ENCODE measurements at regions of chr5 and their contacts with region 1.

Region 1: GRCh38 chr5:160342403-160342941 is 28.0 kb downstream of the C1QTNF2 start:
- DNase-seq: no peak
- H3K4me3 ChIP-seq: no peak overlapping the region
- H3K27ac ChIP-seq: no peak overlapping the region
- H3K4me1 ChIP-seq: peaks cover 0 to 5% (median 4%) of the 10 kb centered on the region in 4 experiments; a peak in 5 of 7 replicates
- H3K27me3 ChIP-seq: no peaks in the 10 kb centered on the region; a peak in 1 of 7 replicates
- CTCF ChIP-seq: no peak
- EP300 ChIP-seq: no peak
- POLR2A ChIP-seq: no peak
- RAD21 ChIP-seq: no peak

Region 2: GRCh38 chr5:160021831-160022446 is 320.5 kb before region 1 on chr5:
- CTCF ChIA-PET with region 1: interaction called, 47 read pairs
- POLR2A ChIA-PET with region 1: no interaction called
- DNase-seq: peak in 1 of 2 experiments; percentile 57
- H3K4me3 ChIP-seq: no peak overlapping the region
- H3K27ac ChIP-seq: no peak overlapping the region
- H3K4me1 ChIP-seq: no peaks in the 10 kb centered on the region
- H3K27me3 ChIP-seq: no peaks in the 10 kb centered on the region
- CTCF ChIP-seq: peak in 2 of 3 experiments; percentile 72 to 75; a peak in 3 of 4 replicates
- EP300 ChIP-seq: no peak
- POLR2A ChIP-seq: no peak
- RAD21 ChIP-seq: peak; percentile 83 to 90

Region 3: DNA sequence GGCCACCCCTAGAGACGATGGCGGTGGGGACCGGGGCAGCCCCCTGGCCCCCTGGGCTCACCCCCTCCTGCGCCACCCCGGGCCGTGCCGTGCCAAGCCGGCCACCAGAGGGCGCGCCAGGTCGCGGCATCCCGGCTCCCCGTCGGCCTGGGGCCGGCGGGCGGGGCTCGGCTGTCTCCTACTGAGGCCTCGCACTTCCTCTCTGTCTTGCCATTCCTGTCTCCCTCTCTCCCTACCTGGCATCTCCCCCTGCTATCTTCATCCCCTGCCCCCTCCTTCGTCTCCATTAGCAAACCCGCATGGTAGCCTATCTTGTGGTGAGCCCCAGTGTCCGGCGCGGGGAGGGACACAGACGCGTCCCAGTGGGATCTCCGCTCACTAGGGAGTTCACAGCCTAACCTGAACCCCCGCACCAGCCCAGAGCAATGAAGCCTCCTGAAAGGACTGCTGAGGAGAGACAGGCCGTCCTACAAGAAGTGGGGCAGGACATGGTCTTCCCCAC is 143.0 kb before region 1 on chr5:
- CTCF ChIA-PET with region 1: interaction called, 62 read pairs
- POLR2A ChIA-PET with region 1: interaction called, 3 read pairs
- DNase-seq: peak in 1 of 2 experiments; percentile 93
- H3K4me3 ChIP-seq: peak overlapping the region in 3 of 4 experiments; percentile 5 to 51 (median 22); a peak in 5 of 8 replicates
- H3K27ac ChIP-seq: no peak overlapping the region
- H3K4me1 ChIP-seq: peaks cover 7 to 29% (median 17%) of the 10 kb centered on the region in 4 experiments
- H3K27me3 ChIP-seq: no peaks in the 10 kb centered on the region
- CTCF ChIP-seq: peak; percentile 77 to 90 (median 87)
- EP300 ChIP-seq: peak in 1 of 2 experiments; percentile 81; a peak in 1 of 3 replicates
- POLR2A ChIP-seq: no peak
- RAD21 ChIP-seq: peak; percentile 82 to 90

Region 4: DNA sequence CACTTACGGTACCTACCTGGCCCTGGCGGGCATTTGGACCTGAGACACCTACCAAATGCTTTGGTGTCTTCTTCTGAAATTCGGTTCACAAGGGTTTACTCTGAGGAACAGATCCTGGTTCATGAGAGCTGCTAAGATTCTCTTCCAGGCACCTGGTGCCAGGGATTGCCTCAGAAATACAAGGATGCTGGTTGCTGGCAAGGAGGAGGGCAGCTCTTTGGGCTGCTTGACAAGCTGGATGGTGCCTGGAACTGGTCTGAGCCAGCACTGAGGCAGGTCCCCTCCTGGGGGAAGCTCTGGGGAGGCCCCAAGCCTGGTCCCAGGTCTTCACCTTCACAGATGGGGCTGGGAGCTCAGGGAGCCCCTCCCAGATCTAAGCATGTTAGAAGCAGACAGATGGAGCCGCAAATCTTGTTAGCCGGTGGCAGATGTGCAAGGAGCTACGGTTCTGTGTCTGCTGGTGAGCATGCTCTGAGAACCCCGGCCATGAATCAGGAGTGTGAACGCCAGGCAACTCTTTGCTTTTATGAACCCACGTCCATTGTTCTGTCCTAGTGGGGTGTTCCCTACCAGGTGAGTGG is 96.9 kb before region 1 on chr5:
- CTCF ChIA-PET with region 1: interaction called, 231 read pairs
- POLR2A ChIA-PET with region 1: interaction called, 9 read pairs
- DNase-seq: no peak
- H3K4me3 ChIP-seq: no peak overlapping the region
- H3K27ac ChIP-seq: no peak overlapping the region
- H3K4me1 ChIP-seq: peaks cover 0 to 3% (median 0%) of the 10 kb centered on the region in 4 experiments; a peak in 4 of 7 replicates
- H3K27me3 ChIP-seq: no peaks in the 10 kb centered on the region
- CTCF ChIP-seq: no peak
- EP300 ChIP-seq: no peak
- POLR2A ChIP-seq: 0 out of 3 replicates have a peak, but pooled peaks of 1 of the 2 experiments have one; percentile 20
- RAD21 ChIP-seq: no peak

Region 5: GRCh38 chr5:160287378-160288051 is 55.0 kb before region 1 on chr5:
- CTCF ChIA-PET with region 1: interaction called, 15 read pairs
- POLR2A ChIA-PET with region 1: interaction called, 6 read pairs
- DNase-seq: peak; percentile 81 to 91
- H3K4me3 ChIP-seq: peak overlapping the region in 1 of 4 experiments; percentile 36; a peak in 2 of 8 replicates
- H3K27ac ChIP-seq: peak overlapping the region; percentile 86
- H3K4me1 ChIP-seq: peaks cover 11 to 37% (median 22%) of the 10 kb centered on the region in 4 experiments
- H3K27me3 ChIP-seq: no peaks in the 10 kb centered on the region
- CTCF ChIP-seq: no peak
- EP300 ChIP-seq: peak in 1 of 2 experiments; percentile 85; a peak in 1 of 3 replicates
- POLR2A ChIP-seq: peak; percentile 54 to 64; a peak in 1 of 3 replicates
- RAD21 ChIP-seq: peak in 1 of 2 experiments; percentile 22; a peak in 1 of 4 replicates

Region 6: DNA sequence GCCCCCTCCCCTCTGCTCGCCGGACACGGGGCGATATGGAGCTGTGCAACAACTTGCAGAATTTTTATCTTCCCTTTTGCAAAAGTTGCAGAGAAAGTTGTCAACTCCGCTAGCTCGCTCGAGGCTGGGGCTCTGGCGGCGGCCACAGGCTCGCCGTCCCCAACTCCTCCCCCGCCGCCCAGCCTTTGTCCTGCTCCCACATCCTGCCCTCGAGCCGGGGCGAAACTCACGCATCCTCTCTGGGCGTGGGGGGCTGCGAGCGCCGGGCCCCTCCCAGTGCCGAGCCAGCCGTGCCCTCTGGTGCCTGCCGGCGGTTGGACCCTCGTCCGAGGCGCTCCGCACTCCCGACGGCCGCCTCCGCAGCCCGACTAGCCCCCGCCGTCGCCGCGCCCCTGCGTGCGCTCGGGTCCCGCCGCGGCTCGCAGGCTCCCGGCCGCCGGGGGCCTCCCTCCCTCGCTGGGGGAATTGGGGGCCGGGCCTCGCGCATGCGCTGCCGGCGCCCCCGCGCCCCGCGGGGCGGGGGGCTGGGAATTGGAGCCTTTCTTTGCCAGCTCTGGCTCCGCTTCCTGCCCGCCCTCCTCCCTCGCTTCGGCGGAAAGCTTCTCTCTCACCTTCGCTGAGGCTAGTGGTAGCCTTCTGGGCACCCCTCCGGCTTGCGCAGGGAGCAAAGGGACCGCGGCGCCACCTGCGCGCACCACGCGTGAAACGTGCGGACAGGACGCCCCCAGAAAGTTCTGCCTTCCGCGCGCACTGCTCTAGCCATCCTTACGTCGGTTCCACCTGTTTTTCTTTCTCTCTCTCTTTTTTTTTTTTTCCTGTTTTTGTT is 30.1 kb before region 1 on chr5 and contains the start of gene CCNJL:
- CTCF ChIA-PET with region 1: interaction called, 20 read pairs
- POLR2A ChIA-PET with region 1: interaction called, 7 read pairs
- DNase-seq: peak in 1 of 2 experiments; percentile 92
- H3K4me3 ChIP-seq: peak within 1 kb of the TSS; percentile 87 to 93 (median 92)
- H3K27ac ChIP-seq: peak within 1 kb of the TSS; percentile 43; the same call in 1 of the 2 replicates
- H3K4me1 ChIP-seq: peaks cover 4 to 7% (median 6%) of the 10 kb centered on the region in 4 experiments; a peak in 5 of 7 replicates
- H3K27me3 ChIP-seq: no peaks in the 10 kb centered on the region
- CTCF ChIP-seq: no peak
- EP300 ChIP-seq: no peak
- POLR2A ChIP-seq: peak in 1 of 2 experiments; percentile 61; a peak in 2 of 3 replicates
- RAD21 ChIP-seq: no peak; a peak in 1 of 4 replicates
- total RNA-seq, gene CCNJL: 34.6 and 36.2 TPM in 2 replicates

Region 7: GRCh38 chr5:160357861-160358411 is 15.5 kb after region 1 on chr5:
- CTCF ChIA-PET with region 1: interaction called, 30 read pairs
- POLR2A ChIA-PET with region 1: interaction called, 3 read pairs
- DNase-seq: no peak
- H3K4me3 ChIP-seq: no peak overlapping the region
- H3K27ac ChIP-seq: no peak overlapping the region
- H3K4me1 ChIP-seq: peaks cover 0 to 2% (median 1%) of the 10 kb centered on the region in 4 experiments; a peak in 6 of 7 replicates
- H3K27me3 ChIP-seq: no peaks in the 10 kb centered on the region; a peak in 1 of 7 replicates
- CTCF ChIP-seq: no peak
- EP300 ChIP-seq: no peak
- POLR2A ChIP-seq: no peak
- RAD21 ChIP-seq: no peak

Measured in H1 (cell line).